HepG2 (cell line): ENCODE measurements at regions of chr14 and their contacts with region 1.

Region 1: DNA sequence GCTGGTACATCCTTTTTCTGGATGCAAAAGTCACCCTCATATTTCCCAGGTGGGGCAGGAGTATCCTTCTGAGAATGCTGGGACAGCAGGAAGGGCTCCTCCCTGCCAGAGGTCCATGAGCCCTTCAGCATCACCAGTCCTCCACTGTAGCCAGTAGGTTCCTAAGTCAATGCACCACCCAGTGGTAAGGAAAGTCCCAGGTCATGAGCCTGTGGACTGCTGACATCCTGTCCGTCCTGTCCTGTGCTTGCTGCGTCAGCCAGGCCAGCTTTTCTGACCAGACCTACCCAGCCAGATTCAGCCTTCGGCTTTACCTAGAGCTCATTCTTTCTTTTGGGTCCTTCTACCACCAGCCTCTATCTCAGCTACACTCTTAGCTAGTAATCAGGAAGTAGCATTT is 23.0 kb upstream of the ACTN1 start:
- DNase-seq: peak; percentile 73
- ATAC-seq: peak; percentile 99
- H3K4me3 ChIP-seq: no peak overlapping the region
- H3K27ac ChIP-seq: no peak overlapping the region
- H3K4me1 ChIP-seq: peaks cover 28% of the 10 kb centered on the region
- H3K27me3 ChIP-seq: peaks cover 0 to 26% of the 10 kb centered on the region in 2 experiments; a peak in 3 of 5 replicates
- CTCF ChIP-seq: peak; percentile 89
- EP300 ChIP-seq: no peak
- POLR2A ChIP-seq: no peak
- RAD21 ChIP-seq: peak; percentile 69; the same call in 1 of the 2 replicates

Region 2: GRCh38 chr14:69107407-69108003 is 105.4 kb after region 1 on chr14:
- CTCF ChIA-PET with region 1: no interaction called
- POLR2A ChIA-PET with region 1: no interaction called
- in situ Hi-C with region 1: no loop called
- intact Hi-C with region 1: loop called (anchors 2 kb)
- DNase-seq: peak; percentile 69
- ATAC-seq: peak; percentile 85
- H3K4me3 ChIP-seq: no peak overlapping the region
- H3K27ac ChIP-seq: no peak overlapping the region
- H3K4me1 ChIP-seq: no peaks in the 10 kb centered on the region
- H3K27me3 ChIP-seq: no peaks in the 10 kb centered on the region
- CTCF ChIP-seq: peak; percentile 87
- EP300 ChIP-seq: no peak
- POLR2A ChIP-seq: no peak
- RAD21 ChIP-seq: peak; percentile 87